GM12878 (cell line): ENCODE measurements at regions of chr10 and their contacts with region 1.

Region 1: GRCh38 chr10:124741281-124741921 is 2.8 kb downstream of the FAM53B start:
- DNase-seq: no peak
- ATAC-seq: peak; percentile 77
- H3K4me3 ChIP-seq: peak overlapping the region; percentile 84
- H3K27ac ChIP-seq: peak overlapping the region; percentile 57
- H3K4me1 ChIP-seq: peaks cover 48% of the 10 kb centered on the region
- H3K27me3 ChIP-seq: no peaks in the 10 kb centered on the region
- CTCF ChIP-seq: peak; percentile 81 to 91 (median 88); a peak in 5 of 6 replicates
- EP300 ChIP-seq: no peak
- POLR2A ChIP-seq: no peak
- RAD21 ChIP-seq: peak; percentile 86

Region 2: DNA sequence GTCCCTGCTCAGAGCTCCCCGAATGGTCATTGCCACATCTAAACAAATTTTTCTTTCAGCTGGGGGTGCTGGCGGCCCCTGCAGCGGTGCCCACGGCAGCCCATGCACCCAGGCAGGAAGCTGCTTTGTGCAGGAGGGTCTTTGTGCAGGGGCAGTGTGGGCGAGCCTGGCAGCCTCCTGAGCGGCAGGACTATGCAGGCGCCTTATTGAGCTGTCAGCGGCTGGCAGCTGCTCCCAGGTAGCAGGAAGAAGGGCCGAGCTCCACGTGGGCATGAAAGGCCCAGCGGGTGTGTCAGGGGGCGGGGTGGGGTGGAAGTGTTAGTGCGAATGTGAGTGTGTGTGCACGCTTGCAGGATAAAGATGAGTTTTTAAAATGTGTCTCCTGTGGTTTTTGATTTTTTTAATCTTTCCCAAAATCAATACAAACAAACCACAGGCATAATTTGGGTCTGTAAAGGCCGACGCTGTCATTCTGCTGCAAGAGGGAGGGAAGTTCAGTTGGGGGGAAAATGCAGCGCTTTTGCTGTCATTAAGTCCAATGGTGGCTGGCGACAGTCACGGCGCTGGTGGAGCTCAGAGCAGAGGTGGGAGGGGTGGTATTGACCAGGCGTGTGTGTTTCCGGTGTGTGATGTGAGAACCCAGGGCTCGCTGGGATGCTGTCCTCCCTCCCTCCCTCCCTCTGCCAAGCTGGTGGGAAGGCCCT is 195.9 kb before region 1 on chr10:
- CTCF ChIA-PET with region 1: interaction called, 149 read pairs
- POLR2A ChIA-PET with region 1: interaction called, 3 read pairs
- RAD21 ChIA-PET with region 1: interaction called, 67 read pairs
- SMC1A ChIA-PET with region 1: interaction called, 67 read pairs
- in situ Hi-C with region 1: no loop called
- intact Hi-C with region 1: loop called (anchors 1 kb)
- DNase-seq: no peak
- ATAC-seq: no peak
- H3K4me3 ChIP-seq: no peak overlapping the region
- H3K27ac ChIP-seq: no peak overlapping the region
- H3K4me1 ChIP-seq: peaks cover 3% of the 10 kb centered on the region
- H3K27me3 ChIP-seq: no peaks in the 10 kb centered on the region; a peak in 1 of 4 replicates
- CTCF ChIP-seq: no peak
- EP300 ChIP-seq: no peak
- POLR2A ChIP-seq: no peak
- RAD21 ChIP-seq: no peak

Region 3: GRCh38 chr10:124626759-124627380 is 114.5 kb before region 1 on chr10:
- CTCF ChIA-PET with region 1: interaction called, 44 read pairs
- POLR2A ChIA-PET with region 1: no interaction called
- RAD21 ChIA-PET with region 1: interaction called, 35 read pairs
- SMC1A ChIA-PET with region 1: interaction called, 6 read pairs
- in situ Hi-C with region 1: no loop called
- intact Hi-C with region 1: loop called (anchors 5 kb)
- DNase-seq: peak; percentile 38
- ATAC-seq: peak; percentile 80
- H3K4me3 ChIP-seq: no peak overlapping the region
- H3K27ac ChIP-seq: no peak overlapping the region; the same call in 1 of the 2 replicates
- H3K4me1 ChIP-seq: peaks cover 25% of the 10 kb centered on the region
- H3K27me3 ChIP-seq: no peaks in the 10 kb centered on the region
- CTCF ChIP-seq: peak in 2 of 3 experiments; percentile 24 to 30; a peak in 4 of 6 replicates
- EP300 ChIP-seq: 0 out of 4 replicates have a peak, but pooled peaks of 1 of the 2 experiments have one; percentile 13
- POLR2A ChIP-seq: no peak
- RAD21 ChIP-seq: peak; percentile 21; the same call in 1 of the 2 replicates

Region 4: GRCh38 chr10:124657806-124658205 is 83.6 kb before region 1 on chr10:
- CTCF ChIA-PET with region 1: interaction called, 73 read pairs
- POLR2A ChIA-PET with region 1: interaction called, 3 read pairs
- RAD21 ChIA-PET with region 1: interaction called, 5 read pairs
- SMC1A ChIA-PET with region 1: interaction called, 7 read pairs
- in situ Hi-C with region 1: no loop called
- intact Hi-C with region 1: no loop called
- DNase-seq: peak; percentile 40
- ATAC-seq: peak; percentile 85
- H3K4me3 ChIP-seq: no peak overlapping the region
- H3K27ac ChIP-seq: peak overlapping the region; percentile 6; the same call in 1 of the 2 replicates
- H3K4me1 ChIP-seq: peaks cover 13% of the 10 kb centered on the region
- H3K27me3 ChIP-seq: no peaks in the 10 kb centered on the region
- CTCF ChIP-seq: no peak
- EP300 ChIP-seq: no peak
- POLR2A ChIP-seq: no peak
- RAD21 ChIP-seq: no peak

Region 5: GRCh38 chr10:124703778-124704427 is 37.5 kb before region 1 on chr10:
- CTCF ChIA-PET with region 1: interaction called, 74 read pairs
- POLR2A ChIA-PET with region 1: interaction called, 3 read pairs
- RAD21 ChIA-PET with region 1: interaction called, 86 read pairs
- SMC1A ChIA-PET with region 1: interaction called, 16 read pairs
- in situ Hi-C with region 1: no loop called
- intact Hi-C with region 1: no loop called
- DNase-seq: no peak
- ATAC-seq: no peak
- H3K4me3 ChIP-seq: no peak overlapping the region
- H3K27ac ChIP-seq: no peak overlapping the region
- H3K4me1 ChIP-seq: peaks cover 30% of the 10 kb centered on the region
- H3K27me3 ChIP-seq: no peaks in the 10 kb centered on the region
- CTCF ChIP-seq: no peak
- EP300 ChIP-seq: no peak
- POLR2A ChIP-seq: no peak
- RAD21 ChIP-seq: no peak

Region 6: GRCh38 chr10:124827474-124827873 is 86.1 kb after region 1 on chr10:
- CTCF ChIA-PET with region 1: interaction called, 22 read pairs
- POLR2A ChIA-PET with region 1: no interaction called
- RAD21 ChIA-PET with region 1: interaction called, 6 read pairs
- SMC1A ChIA-PET with region 1: interaction called, 13 read pairs
- in situ Hi-C with region 1: no loop called
- intact Hi-C with region 1: loop called (anchors 5 kb)
- DNase-seq: no peak
- ATAC-seq: no peak
- H3K4me3 ChIP-seq: no peak overlapping the region
- H3K27ac ChIP-seq: no peak overlapping the region
- H3K4me1 ChIP-seq: no peaks in the 10 kb centered on the region
- H3K27me3 ChIP-seq: no peaks in the 10 kb centered on the region
- CTCF ChIP-seq: peak; percentile 40 to 44 (median 44); a peak in 4 of 6 replicates
- EP300 ChIP-seq: no peak
- POLR2A ChIP-seq: no peak
- RAD21 ChIP-seq: peak; percentile 48; the same call in 1 of the 2 replicates

Region 7: DNA sequence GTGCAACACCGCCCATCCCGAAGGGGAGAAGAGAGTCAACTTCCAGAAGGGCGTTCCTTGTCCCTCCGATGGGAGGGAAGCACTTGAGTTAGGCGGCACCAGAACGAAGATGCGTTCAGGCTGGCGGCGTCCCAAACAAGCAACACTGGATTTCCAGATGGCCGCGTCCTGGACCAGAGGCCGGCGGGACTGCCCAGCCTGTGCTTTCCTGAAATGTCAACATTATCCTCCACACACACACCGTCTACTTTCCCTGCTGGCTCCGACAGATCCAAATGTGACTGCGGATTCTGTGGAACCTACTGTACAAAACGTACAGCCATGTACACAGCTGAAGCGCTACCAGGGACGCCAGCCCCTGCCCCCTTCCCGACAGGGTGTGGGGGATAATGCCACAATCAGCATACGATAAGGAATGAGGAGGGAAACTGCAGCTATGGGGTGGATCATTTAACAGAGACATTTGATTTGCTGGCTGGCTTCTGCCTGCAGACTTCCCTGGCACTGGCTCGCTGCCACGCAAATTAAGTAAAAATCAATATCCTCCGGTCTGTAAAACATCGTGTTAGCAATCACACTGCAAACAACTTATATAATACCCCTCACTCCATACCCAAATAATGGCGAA is 282.6 kb after region 1 on chr10:
- CTCF ChIA-PET with region 1: no interaction called
- POLR2A ChIA-PET with region 1: no interaction called
- RAD21 ChIA-PET with region 1: no interaction called
- SMC1A ChIA-PET with region 1: no interaction called
- in situ Hi-C with region 1: no loop called
- intact Hi-C with region 1: no loop called
- DNase-seq: no peak
- ATAC-seq: no peak
- H3K4me3 ChIP-seq: no peak overlapping the region
- H3K27ac ChIP-seq: no peak overlapping the region
- H3K4me1 ChIP-seq: no peaks in the 10 kb centered on the region
- H3K27me3 ChIP-seq: peaks cover under 1 to 3% of the 10 kb centered on the region in 2 experiments; a peak in 3 of 4 replicates
- CTCF ChIP-seq: no peak
- EP300 ChIP-seq: no peak
- POLR2A ChIP-seq: no peak
- RAD21 ChIP-seq: no peak